Naive thymus-derived CD4-positive, alpha-beta T cell (primary cell): ENCODE measurements at regions of chr4 and their contacts with region 1.

Region 1: DNA sequence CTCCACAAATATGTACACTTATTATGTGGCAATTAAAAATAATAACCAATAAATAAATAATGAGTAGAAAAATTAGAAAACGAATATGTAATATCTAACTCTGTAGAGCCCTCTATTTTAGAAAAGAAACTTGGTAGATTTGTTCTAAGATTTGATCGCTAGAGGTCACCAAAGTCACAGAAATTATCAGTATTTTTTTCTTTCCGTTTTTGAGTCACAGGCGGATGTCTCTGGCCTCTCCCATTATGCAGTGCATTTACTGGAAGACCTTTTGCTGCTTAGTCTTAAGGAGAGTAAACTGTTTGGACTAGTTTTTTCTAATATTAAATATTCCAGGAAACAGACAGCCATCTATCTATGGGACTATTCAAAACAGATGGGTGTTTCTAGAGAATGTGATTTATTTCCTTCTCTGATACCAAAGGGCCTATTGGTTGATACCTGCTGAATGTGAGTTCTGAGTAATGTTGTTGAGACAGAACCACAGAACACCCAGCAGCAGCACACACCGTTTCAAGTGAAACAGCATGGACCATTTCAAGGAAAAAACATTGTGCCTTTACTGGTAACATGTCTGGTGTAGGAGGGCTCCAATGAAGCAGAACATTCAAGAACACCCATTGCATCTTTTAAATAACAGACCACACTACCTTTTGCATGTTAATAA is 34.0 kb upstream of the GYPA start:
- DNase-seq: peak in 7 of 9 donors; percentile 10 to 62 (median 45)
- ATAC-seq: peak; percentile 63
- H3K4me3 ChIP-seq: no peak overlapping the region
- H3K4me3 Mint-ChIP-seq: peak overlapping the region in 1 of 10 donors; percentile 44
- H3K27ac ChIP-seq: no peak overlapping the region
- H3K27ac Mint-ChIP-seq: peak overlapping the region in 3 of 9 donors; percentile 25 to 84 (median 41)
- H3K4me1 ChIP-seq: peaks cover 0 to 3% of the 10 kb centered on the region in 2 donors
- H3K4me1 Mint-ChIP-seq: peaks cover 0 to 29% (median 4%) of the 10 kb centered on the region in 7 donors
- H3K27me3 ChIP-seq: no peaks in the 10 kb centered on the region
- H3K27me3 Mint-ChIP-seq: peaks cover 0 to 11% (median 9%) of the 10 kb centered on the region in 5 donors

Region 2: GRCh38 chr4:144787365-144788258 is 613.1 kb after region 1 on chr4:
- CTCF ChIA-PET with region 1: no interaction called
- POLR2A ChIA-PET with region 1: no interaction called
- intact Hi-C with region 1: loop called in 1 of 2 experiments (anchors 1 kb)
- DNase-seq: peak in 1 of 9 donors; percentile 2
- ATAC-seq: no peak
- H3K4me3 ChIP-seq: no peak overlapping the region
- H3K4me3 Mint-ChIP-seq: no peak overlapping the region
- H3K27ac ChIP-seq: no peak overlapping the region
- H3K27ac Mint-ChIP-seq: peak overlapping the region in 1 of 9 donors; percentile 2
- H3K4me1 ChIP-seq: no peaks in the 10 kb centered on the region
- H3K4me1 Mint-ChIP-seq: peaks cover 0 to 3% (median 0%) of the 10 kb centered on the region in 7 donors
- H3K27me3 ChIP-seq: no peaks in the 10 kb centered on the region
- H3K27me3 Mint-ChIP-seq: peaks cover 0 to 8% (median 5%) of the 10 kb centered on the region in 5 donors